PC-3 (cell line): ENCODE measurements at regions of chr3 and their contacts with region 1.

Region 1: GRCh38 chr3:15268033-15268631 is 62.1 kb downstream of the CAPN7 start:
- DNase-seq: peak; percentile 91
- ATAC-seq: peak; percentile 58
- H3K4me3 ChIP-seq: no peak overlapping the region
- H3K27ac ChIP-seq: no peak overlapping the region
- H3K4me1 ChIP-seq: peaks cover 22% of the 10 kb centered on the region
- H3K27me3 ChIP-seq: no peaks in the 10 kb centered on the region
- CTCF ChIP-seq: peak; percentile 98

Region 2: DNA sequence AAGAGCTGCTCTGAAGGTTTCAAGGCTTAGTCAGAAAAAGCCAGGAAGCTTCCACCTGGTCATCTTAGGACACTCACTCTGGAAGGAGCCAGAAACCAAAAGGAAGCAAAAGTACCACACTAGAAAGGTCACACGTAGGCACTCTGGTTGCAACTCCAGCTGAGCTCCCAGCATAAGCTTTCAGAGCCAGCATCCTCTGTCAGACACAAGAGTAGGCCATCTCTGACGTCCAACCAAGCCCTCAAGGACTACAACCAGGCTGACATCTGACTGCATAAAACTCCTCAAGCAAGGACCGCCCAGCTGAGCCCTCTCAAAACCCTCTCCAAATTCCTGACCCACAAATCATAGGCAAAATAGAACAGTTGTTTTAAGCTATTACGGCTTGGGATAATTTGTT is 51.4 kb after region 1 on chr3:
- CTCF ChIA-PET with region 1: interaction called, 5 read pairs
- POLR2A ChIA-PET with region 1: no interaction called
- intact Hi-C with region 1: loop called (anchors 2 kb)
- DNase-seq: no peak
- ATAC-seq: no peak
- H3K4me3 ChIP-seq: no peak overlapping the region
- H3K27ac ChIP-seq: peak overlapping the region; percentile 43
- H3K4me1 ChIP-seq: peaks cover 37% of the 10 kb centered on the region
- H3K27me3 ChIP-seq: no peaks in the 10 kb centered on the region
- CTCF ChIP-seq: no peak

Region 3: GRCh38 chr3:15377961-15378791 is 110.0 kb after region 1 on chr3:
- CTCF ChIA-PET with region 1: interaction called, 6 read pairs
- POLR2A ChIA-PET with region 1: no interaction called
- intact Hi-C with region 1: loop called (anchors 1 kb)
- DNase-seq: peak; percentile 97
- ATAC-seq: peak; percentile 98
- H3K4me3 ChIP-seq: no peak overlapping the region
- H3K27ac ChIP-seq: 0 out of 2 replicates have a peak overlapping the region, but pooled peaks have one; percentile 6
- H3K4me1 ChIP-seq: no peaks in the 10 kb centered on the region
- H3K27me3 ChIP-seq: no peaks in the 10 kb centered on the region
- CTCF ChIP-seq: peak; percentile 92

Region 4: DNA sequence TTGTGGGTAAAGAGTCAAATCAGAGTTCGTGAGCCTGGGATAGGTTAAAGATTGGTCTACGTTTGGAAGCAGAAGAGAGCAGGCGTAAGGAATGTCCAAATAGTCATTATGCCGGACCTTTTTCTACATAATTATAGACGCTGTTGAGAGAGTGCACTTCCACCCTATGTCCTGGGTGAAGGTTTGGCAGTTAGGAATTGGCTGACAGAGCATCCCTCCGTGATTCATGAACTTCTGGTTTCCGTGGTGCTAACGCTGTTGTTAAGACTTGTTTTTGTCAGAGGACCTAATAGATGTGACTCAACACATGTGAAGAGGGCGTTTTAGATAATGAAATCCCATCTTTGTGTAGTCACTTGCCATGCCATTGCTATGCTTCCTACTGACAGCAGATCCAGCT is 160.4 kb after region 1 on chr3:
- CTCF ChIA-PET with region 1: no interaction called
- POLR2A ChIA-PET with region 1: no interaction called
- intact Hi-C with region 1: loop called (anchors 2 kb)
- DNase-seq: peak; percentile 61
- ATAC-seq: peak; percentile 56
- H3K4me3 ChIP-seq: peak overlapping the region; percentile 100
- H3K27ac ChIP-seq: 0 out of 2 replicates have a peak overlapping the region, but pooled peaks have one; percentile 4
- H3K4me1 ChIP-seq: peaks cover 20% of the 10 kb centered on the region
- H3K27me3 ChIP-seq: no peaks in the 10 kb centered on the region
- CTCF ChIP-seq: no peak